Activated T-helper 1 cell treated with anti-CD3 and anti-CD28 coated beads, Interleukin-12 subunit alpha, Interleukin-12 subunit beta, Interleukin-2, Interleukin-4 antibody, amounts not matched to agents 30 ng/mL and 10 ng/mL and 1 ng/mL, durations not matched to agents 14 hours and 24 hours and 36 hours (primary cell): ENCODE measurements at regions of chr2 and their contacts with region 1.

Region 1: DNA sequence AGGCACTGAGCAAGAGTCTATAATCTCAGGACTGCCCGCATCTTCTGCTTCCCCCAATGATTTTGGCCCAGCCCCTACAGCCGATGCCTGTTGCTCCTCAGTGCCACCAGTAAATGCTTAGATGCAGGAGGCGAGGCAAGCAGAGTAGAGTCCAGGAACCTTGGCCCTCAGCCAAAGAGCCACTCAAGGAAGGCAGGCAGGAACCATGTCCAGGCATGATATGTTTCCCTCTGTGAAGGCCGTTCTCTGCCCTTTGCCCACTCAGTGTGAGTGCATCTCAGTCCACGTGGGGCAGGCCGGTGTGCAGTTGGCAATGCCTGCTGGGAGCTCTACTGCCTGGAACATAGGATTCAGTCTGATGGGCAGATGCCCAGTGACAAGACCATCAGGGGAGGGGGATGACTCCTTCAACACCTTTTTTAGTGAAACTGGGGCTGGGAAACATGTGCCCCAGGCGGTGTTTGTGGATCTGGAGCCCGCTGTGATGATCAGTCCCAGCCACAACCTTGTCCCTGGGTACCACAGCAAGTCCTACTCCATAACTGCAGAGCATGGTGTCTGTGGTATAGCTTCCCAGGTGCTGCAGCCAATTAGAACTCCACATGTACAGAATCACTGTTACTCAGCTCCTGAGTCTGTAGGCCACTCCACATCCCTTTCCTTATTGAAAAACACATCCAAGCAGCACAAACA is 9.7 kb upstream of the DNAJB2 start:
- DNase-seq: no peak
- H3K4me3 Mint-ChIP-seq: no peak overlapping the region
- H3K27ac Mint-ChIP-seq: no peak overlapping the region
- H3K4me1 Mint-ChIP-seq: no peaks in the 10 kb centered on the region
- H3K27me3 Mint-ChIP-seq: peaks cover 8% of the 10 kb centered on the region

Region 2: DNA sequence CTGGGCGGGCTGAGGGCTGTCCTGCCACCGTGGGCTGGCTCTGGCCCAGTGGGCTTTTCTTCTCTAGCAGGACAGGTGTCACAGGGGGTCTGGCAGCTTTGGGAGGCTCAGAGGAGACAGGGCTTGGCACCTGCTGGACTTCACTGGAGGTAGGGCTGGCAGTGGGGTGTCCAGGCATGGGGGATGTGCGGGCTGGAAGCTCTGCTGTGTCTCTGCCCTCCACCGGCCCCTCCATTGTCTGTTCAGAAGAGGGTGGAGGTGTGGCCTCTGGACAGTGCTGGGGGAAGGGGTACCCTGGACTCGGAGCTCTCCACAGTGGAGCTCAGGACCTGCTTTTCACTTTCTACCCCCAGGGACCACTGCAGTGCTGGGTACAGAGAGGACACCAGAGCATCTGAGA is 30.5 kb after region 1 on chr2:
- intact Hi-C with region 1: loop called (anchors 5 kb)
- DNase-seq: no peak
- H3K4me3 Mint-ChIP-seq: no peak overlapping the region
- H3K27ac Mint-ChIP-seq: no peak overlapping the region
- H3K4me1 Mint-ChIP-seq: peaks cover 6% of the 10 kb centered on the region
- H3K27me3 Mint-ChIP-seq: peaks cover 29% of the 10 kb centered on the region

Region 3: GRCh38 chr2:219325657-219326315 is 56.3 kb after region 1 on chr2:
- intact Hi-C with region 1: no loop called
- DNase-seq: no peak
- H3K4me3 Mint-ChIP-seq: no peak overlapping the region
- H3K27ac Mint-ChIP-seq: no peak overlapping the region
- H3K4me1 Mint-ChIP-seq: no peaks in the 10 kb centered on the region
- H3K27me3 Mint-ChIP-seq: peaks cover 34% of the 10 kb centered on the region

Region 4: GRCh38 chr2:219836647-219837177 is 567.2 kb after region 1 on chr2:
- intact Hi-C with region 1: no loop called
- DNase-seq: no peak
- H3K4me3 Mint-ChIP-seq: no peak overlapping the region
- H3K27ac Mint-ChIP-seq: no peak overlapping the region
- H3K4me1 Mint-ChIP-seq: no peaks in the 10 kb centered on the region
- H3K27me3 Mint-ChIP-seq: no peaks in the 10 kb centered on the region